T-cell (primary cell): ENCODE measurements at regions of chr17 and their contacts with region 1.

Region 1: DNA sequence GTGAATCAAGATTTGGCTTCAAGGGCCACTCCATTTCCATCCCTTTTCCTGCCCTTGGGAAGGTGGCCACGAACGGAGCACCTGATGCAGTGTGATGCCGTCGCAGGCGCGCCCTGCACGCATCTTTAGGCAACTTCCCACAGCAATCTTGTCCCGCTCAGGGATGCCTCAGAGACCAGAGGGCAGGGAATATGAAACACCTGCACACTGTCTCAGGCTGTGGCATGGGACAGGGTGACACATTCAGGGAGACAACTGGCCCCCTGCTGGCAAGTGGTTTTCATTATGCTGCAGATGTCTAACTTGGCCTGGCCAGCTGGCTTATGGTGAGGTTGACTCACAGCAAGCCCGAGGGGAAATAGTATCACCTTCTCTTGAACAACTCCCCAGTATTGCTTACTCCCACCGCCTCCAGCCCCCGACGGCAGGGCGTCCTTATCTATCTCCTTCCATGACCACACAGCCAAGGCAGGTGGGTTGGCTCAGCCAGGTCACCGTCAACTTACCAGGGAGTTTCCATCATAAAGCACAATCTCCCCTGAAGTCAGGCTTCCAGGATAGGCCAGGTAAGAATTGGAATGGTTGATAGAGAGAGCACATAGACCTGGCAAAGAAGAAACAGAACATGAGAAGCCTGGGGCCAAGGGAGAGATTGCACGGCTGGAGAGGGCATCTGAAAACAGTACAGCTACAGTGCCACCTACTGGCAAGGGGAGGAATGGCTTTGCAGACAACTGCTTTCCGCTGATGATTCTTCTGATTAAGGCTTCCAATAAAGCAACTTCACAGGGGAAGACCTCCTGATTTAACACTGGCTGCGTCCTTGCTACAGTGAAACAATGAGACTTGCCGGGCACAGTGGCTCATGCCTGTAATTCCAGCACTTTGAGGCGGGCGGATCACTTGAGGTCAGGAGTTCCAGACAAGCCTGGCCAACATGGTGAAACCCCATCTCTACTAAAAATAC is 21.1 kb downstream of the WIPI1 start:
- DNase-seq: peak; percentile 56 to 93 (median 81)
- ATAC-seq: peak; percentile 69 to 76 (median 72)
- H3K4me3 ChIP-seq: no peak overlapping the region
- H3K4me3 Mint-ChIP-seq: peak overlapping the region; percentile 22 to 65 (median 34)
- H3K27ac ChIP-seq: no peak overlapping the region
- H3K27ac Mint-ChIP-seq: peak overlapping the region; percentile 80 to 97
- H3K4me1 ChIP-seq: peaks cover 17 to 43% of the 10 kb centered on the region in 2 experiments
- H3K4me1 Mint-ChIP-seq: peaks cover 52 to 58% (median 56%) of the 10 kb centered on the region in 3 donors
- H3K27me3 ChIP-seq: no peaks in the 10 kb centered on the region
- H3K27me3 Mint-ChIP-seq: no peaks in the 10 kb centered on the region

Region 2: GRCh38 chr17:67959288-67959900 is 476.8 kb before region 1 on chr17:
- CTCF ChIA-PET with region 1: interaction called in 1 of 2 experiments, 11 read pairs
- POLR2A ChIA-PET with region 1: no interaction called
- DNase-seq: no peak
- ATAC-seq: no peak
- H3K4me3 ChIP-seq: no peak overlapping the region
- H3K4me3 Mint-ChIP-seq: no peak overlapping the region
- H3K27ac ChIP-seq: no peak overlapping the region
- H3K27ac Mint-ChIP-seq: peak overlapping the region; percentile 50 to 80
- H3K4me1 ChIP-seq: no peaks in the 10 kb centered on the region
- H3K4me1 Mint-ChIP-seq: peaks cover 0 to 6% (median 4%) of the 10 kb centered on the region in 3 donors
- H3K27me3 ChIP-seq: no peaks in the 10 kb centered on the region
- H3K27me3 Mint-ChIP-seq: no peaks in the 10 kb centered on the region

Region 3: DNA sequence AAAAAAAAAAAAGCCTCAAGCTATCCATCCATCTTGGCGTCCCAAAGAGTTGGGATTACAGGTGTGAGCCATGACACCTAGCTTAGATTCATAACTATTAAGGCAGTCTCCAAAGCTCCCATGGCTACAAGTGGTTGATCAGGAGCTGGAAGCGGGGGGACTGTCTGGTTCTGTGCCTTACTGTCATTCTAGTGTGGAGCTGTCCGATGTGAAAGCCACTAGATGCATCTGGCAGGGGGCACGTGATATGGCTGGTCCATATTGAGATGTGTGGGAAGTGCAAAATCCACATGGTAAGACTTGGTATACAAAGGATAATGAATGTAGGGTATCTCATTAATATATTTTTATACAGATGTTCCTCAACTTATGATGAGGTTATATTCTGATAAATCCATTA is 361.9 kb before region 1 on chr17:
- CTCF ChIA-PET with region 1: no interaction called
- POLR2A ChIA-PET with region 1: interaction called in 1 of 2 experiments, 13 read pairs
- DNase-seq: no peak
- ATAC-seq: no peak
- H3K4me3 ChIP-seq: no peak overlapping the region
- H3K4me3 Mint-ChIP-seq: no peak overlapping the region
- H3K27ac ChIP-seq: no peak overlapping the region
- H3K27ac Mint-ChIP-seq: no peak overlapping the region
- H3K4me1 ChIP-seq: no peaks in the 10 kb centered on the region
- H3K4me1 Mint-ChIP-seq: no peaks in the 10 kb centered on the region
- H3K27me3 ChIP-seq: no peaks in the 10 kb centered on the region
- H3K27me3 Mint-ChIP-seq: no peaks in the 10 kb centered on the region

Region 4: GRCh38 chr17:68101075-68101992 is 334.8 kb before region 1 on chr17:
- CTCF ChIA-PET with region 1: no interaction called
- POLR2A ChIA-PET with region 1: no interaction called
- DNase-seq: peak in 34 of 35 experiments; percentile 13 to 77 (median 52)
- ATAC-seq: peak; percentile 70 to 73 (median 71)
- H3K4me3 ChIP-seq: peak overlapping the region; percentile 71 to 78
- H3K4me3 Mint-ChIP-seq: peak overlapping the region; percentile 91 to 96 (median 95)
- H3K27ac ChIP-seq: peak overlapping the region; percentile 83
- H3K27ac Mint-ChIP-seq: peak overlapping the region; percentile 91 to 93
- H3K4me1 ChIP-seq: peaks cover 14 to 19% of the 10 kb centered on the region in 2 experiments
- H3K4me1 Mint-ChIP-seq: peaks cover 35 to 45% (median 42%) of the 10 kb centered on the region in 3 donors
- H3K27me3 ChIP-seq: no peaks in the 10 kb centered on the region
- H3K27me3 Mint-ChIP-seq: no peaks in the 10 kb centered on the region

Region 5: DNA sequence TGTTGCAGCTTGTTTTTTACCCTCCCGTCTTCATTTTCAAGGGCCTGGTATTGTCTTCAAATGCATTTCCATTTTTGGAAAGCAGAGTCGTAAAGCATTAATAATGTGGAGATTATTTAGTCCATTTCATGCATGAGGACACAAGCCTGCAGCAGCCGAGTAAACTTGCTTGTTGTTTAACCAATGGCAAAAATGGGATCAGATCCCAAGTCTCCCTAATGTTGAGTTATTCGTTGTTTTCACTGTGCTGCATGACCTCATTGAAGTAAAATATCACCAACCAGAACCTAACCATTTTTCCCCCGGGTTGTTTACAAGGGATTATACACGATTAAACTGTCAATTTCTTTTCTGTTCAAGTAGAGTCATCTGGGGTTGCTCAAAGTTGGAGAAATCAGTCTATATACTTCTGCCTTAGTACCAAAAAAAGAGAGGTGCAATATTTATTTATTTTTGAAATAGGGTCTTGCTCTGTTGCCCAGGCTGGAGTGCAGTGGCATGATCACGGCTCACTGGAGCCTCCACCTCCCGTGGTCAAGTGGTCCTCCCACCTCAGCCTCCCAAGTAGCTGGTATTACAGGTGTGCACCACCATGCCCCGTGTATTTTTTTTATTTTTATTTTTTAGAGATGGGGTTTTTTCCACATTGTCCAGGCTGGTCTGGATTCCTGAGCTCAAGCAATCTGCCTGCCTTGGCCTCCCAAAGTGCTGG is 176.0 kb before region 1 on chr17:
- CTCF ChIA-PET with region 1: interaction called, 7 to 22 read pairs
- POLR2A ChIA-PET with region 1: no interaction called
- DNase-seq: no peak
- ATAC-seq: no peak
- H3K4me3 ChIP-seq: no peak overlapping the region
- H3K4me3 Mint-ChIP-seq: peak overlapping the region in 1 of 3 donors; percentile 68
- H3K27ac ChIP-seq: peak overlapping the region; percentile 89
- H3K27ac Mint-ChIP-seq: peak overlapping the region; percentile 89 to 92
- H3K4me1 ChIP-seq: peaks cover 32 to 52% of the 10 kb centered on the region in 2 experiments
- H3K4me1 Mint-ChIP-seq: peaks cover 58 to 68% (median 66%) of the 10 kb centered on the region in 3 donors
- H3K27me3 ChIP-seq: no peaks in the 10 kb centered on the region
- H3K27me3 Mint-ChIP-seq: no peaks in the 10 kb centered on the region